SK-N-SH (cell line): ENCODE measurements at regions of chr1 and their contacts with region 1.

Region 1: DNA sequence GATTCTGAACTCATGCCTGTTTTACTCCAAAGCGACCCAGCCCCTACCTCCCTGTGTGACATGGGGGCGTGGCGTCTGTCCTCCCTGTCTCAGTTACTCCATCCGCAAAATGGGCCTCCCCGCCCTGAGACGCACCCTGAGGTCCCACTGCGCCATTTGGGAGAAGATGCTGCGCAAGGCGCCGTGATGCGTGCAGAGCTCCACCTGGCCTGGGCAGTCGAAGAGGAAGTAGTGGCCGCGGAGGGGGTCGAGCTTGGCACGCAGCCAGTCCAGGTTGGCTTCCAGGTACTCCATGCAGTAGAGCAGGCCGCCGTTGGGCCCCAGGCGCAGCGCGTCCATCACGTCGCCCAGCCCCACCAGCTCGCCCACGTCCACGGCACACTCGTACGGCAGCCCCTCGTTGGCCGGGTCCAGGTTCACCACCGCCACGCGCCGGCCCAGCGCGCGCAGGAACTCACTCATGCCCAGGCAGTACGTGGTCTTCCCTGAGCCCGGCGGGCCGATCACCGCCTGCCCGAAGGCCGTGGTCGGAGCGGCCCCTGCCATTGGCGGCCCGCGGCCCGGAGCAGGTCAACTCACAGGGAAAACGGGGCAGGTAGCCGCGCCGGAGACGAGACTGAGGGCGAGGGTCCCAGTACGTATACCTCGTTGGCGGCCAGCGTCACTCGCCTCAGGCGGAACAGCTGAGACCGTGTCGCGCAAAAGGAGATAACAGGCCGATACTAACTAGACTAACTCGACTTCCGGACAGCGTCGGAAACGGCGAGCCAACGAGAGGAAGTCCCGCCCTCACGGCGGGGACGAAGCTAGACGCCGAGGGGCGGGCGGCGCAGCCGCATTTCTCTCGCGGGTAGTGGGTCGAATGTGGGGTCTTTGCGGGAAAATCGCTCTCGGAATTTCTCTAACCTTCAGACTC is at the start of gene GPN2:
- DNase-seq: peak; percentile 93
- H3K4me3 ChIP-seq: peak within 1 kb of the TSS; percentile 87 to 95
- H3K27ac ChIP-seq: peak within 1 kb of the TSS; percentile 84 to 88
- H3K4me1 ChIP-seq: peaks cover 0 to 16% of the 10 kb centered on the region in 2 experiments; a peak in 2 of 4 replicates
- H3K27me3 ChIP-seq: no peaks in the 10 kb centered on the region
- CTCF ChIP-seq: no peak
- EP300 ChIP-seq: no peak
- RAD21 ChIP-seq: no peak
- polyA plus RNA-seq, gene GPN2: 20.6 and 24.0 TPM in 2 replicates

Region 2: GRCh38 chr1:26864610-26865527 is 24.9 kb before region 1 on chr1:
- CTCF ChIA-PET with region 1: interaction called, 15 read pairs
- POLR2A ChIA-PET with region 1: interaction called, 7 read pairs
- DNase-seq: peak; percentile 97
- H3K4me3 ChIP-seq: peak overlapping the region; percentile 56 to 90
- H3K27ac ChIP-seq: peak overlapping the region; percentile 84 to 94
- H3K4me1 ChIP-seq: peaks cover 6 to 7% of the 10 kb centered on the region in 2 experiments; a peak in 2 of 4 replicates
- H3K27me3 ChIP-seq: no peaks in the 10 kb centered on the region
- CTCF ChIP-seq: no peak; the same call in 1 of the 2 replicates
- EP300 ChIP-seq: 0 out of 4 replicates have a peak, but pooled peaks of 1 of the 2 experiments have one; percentile 21
- RAD21 ChIP-seq: no peak

Region 3: GRCh38 chr1:26900001-26900814 is 10.4 kb after region 1 on chr1 and contains the start of gene GPATCH3:
- CTCF ChIA-PET with region 1: interaction called, 7 read pairs
- POLR2A ChIA-PET with region 1: interaction called, 17 read pairs
- DNase-seq: peak; percentile 90
- H3K4me3 ChIP-seq: peak within 1 kb of the TSS; percentile 84 to 97
- H3K27ac ChIP-seq: peak within 1 kb of the TSS; percentile 68 to 80
- H3K4me1 ChIP-seq: peaks cover 4 to 9% of the 10 kb centered on the region in 2 experiments; a peak in 3 of 4 replicates
- H3K27me3 ChIP-seq: no peaks in the 10 kb centered on the region
- CTCF ChIP-seq: no peak
- EP300 ChIP-seq: no peak
- RAD21 ChIP-seq: no peak
- polyA plus RNA-seq, gene GPATCH3: 9.1 and 11.1 TPM in 2 replicates

Region 4: DNA sequence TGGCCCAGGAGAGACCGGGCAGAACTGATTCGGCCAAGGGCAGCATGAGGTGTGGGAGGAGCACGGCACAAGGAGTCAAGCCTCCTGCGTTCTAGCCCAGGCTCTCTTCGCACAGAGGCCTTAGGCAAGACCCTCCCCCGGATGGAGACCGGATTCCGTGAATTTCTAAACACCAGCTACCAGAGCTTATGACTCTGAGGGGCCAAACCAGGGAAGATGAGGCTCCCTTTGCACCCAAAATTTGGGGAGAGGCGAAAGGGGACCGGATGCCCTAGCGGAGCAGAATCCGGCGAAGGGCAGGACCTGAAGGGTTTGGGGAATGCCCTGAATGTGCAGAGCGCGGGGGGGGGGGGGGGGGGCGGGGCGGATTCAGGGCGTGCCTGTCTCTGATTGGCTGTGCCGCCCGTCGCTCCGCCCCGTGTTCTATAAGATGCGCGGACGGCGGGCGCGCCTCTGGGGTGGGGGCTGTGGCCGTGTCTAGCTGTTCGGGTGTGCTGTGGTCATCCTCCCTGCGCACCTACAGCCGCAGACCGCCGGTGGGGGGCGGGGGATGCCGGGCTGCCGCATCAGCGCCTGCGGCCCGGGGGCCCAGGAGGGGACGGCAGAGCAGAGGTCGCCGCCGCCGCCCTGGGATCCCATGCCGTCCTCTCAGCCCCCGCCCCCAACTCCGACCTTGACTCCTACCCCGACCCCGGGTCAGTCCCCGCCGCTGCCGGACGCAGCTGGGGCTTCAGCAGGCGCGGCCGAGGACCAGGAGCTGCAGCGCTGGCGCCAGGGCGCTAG is 103.6 kb after region 1 on chr1 and contains the start of gene TRNP1:
- CTCF ChIA-PET with region 1: no interaction called
- POLR2A ChIA-PET with region 1: no interaction called
- DNase-seq: peak; percentile 97
- H3K4me3 ChIP-seq: peak within 1 kb of the TSS; percentile 48 to 71
- H3K27ac ChIP-seq: no peak within 1 kb of the TSS
- H3K4me1 ChIP-seq: peaks cover 9 to 12% of the 10 kb centered on the region in 2 experiments; a peak in 2 of 4 replicates
- H3K27me3 ChIP-seq: no peaks in the 10 kb centered on the region
- CTCF ChIP-seq: no peak
- EP300 ChIP-seq: no peak
- RAD21 ChIP-seq: no peak
- polyA plus RNA-seq, gene TRNP1: 8.8 and 11.6 TPM in 2 replicates